GM12878 (cell line): ENCODE measurements at regions of chrX and their contacts with region 1.

Region 1: GRCh38 chrX:130173190-130173895 is 1.6 kb downstream of the RAB33A start:
- DNase-seq: peak; percentile 56
- ATAC-seq: peak; percentile 54
- H3K4me3 ChIP-seq: peak overlapping the region; percentile 80
- H3K27ac ChIP-seq: peak overlapping the region; percentile 84
- H3K4me1 ChIP-seq: peaks cover 17% of the 10 kb centered on the region
- H3K27me3 ChIP-seq: no peaks in the 10 kb centered on the region
- CTCF ChIP-seq: no peak
- EP300 ChIP-seq: no peak
- POLR2A ChIP-seq: peak; percentile 71
- RAD21 ChIP-seq: no peak

Region 2: DNA sequence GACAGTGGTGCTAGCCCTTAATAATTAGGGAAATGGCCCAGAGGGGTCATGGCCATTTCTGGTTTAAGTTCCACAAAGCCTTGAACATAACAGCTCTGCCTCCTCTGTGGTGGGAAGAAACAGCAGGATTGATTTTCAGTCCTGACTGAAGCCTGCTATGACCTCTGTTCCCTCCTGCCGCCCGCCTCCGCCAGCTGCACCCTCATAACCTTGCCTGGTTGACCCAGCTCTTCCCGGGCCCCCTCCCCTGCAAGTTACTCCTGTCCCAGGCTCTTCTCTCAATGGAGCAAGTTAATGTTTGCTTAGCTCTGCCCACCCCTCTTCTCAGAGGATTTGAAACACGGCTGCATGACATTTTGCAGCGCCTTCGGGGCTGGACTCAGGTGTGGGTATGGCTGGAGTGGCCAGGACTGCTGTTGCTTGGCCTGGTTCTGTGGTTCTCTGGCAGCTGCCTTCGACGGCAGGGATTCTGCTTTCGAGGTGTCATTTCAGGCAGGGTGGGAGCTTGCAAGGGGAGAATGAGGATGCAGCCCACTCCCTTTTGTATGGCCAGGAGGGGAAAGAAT is 163.6 kb before region 1 on chrX:
- CTCF ChIA-PET with region 1: no interaction called
- POLR2A ChIA-PET with region 1: no interaction called
- RAD21 ChIA-PET with region 1: no interaction called
- SMC1A ChIA-PET with region 1: no interaction called
- in situ Hi-C with region 1: no loop called
- intact Hi-C with region 1: no loop called
- DNase-seq: no peak
- ATAC-seq: no peak
- H3K4me3 ChIP-seq: no peak overlapping the region
- H3K27ac ChIP-seq: no peak overlapping the region
- H3K4me1 ChIP-seq: no peaks in the 10 kb centered on the region
- H3K27me3 ChIP-seq: no peaks in the 10 kb centered on the region; a peak in 1 of 4 replicates
- CTCF ChIP-seq: no peak
- EP300 ChIP-seq: no peak
- POLR2A ChIP-seq: no peak
- RAD21 ChIP-seq: no peak

Region 3: DNA sequence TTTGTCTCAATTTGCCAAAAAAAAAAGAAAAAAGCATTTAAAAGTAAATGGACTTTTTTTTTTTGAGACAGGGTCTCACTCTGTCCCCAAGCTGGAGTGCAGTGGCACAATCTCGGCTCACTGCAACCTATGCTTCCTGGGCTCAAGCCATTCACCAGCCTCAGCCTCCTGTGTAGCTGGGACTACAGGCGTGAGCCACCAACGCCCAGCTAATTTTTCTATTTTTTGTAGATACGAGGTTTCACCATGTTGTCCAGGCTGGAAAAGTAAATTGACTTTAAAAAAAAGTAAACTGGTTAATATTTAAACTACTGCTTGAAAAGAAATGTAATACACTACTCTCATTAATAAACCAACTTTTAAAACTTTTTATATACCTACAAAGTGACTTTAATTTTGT is 13.6 kb before region 1 on chrX:
- CTCF ChIA-PET with region 1: interaction called, 4 read pairs
- POLR2A ChIA-PET with region 1: interaction called, 5 read pairs
- RAD21 ChIA-PET with region 1: interaction called, 6 read pairs
- SMC1A ChIA-PET with region 1: interaction called, 11 read pairs
- in situ Hi-C with region 1: no loop called
- intact Hi-C with region 1: no loop called
- DNase-seq: no peak
- ATAC-seq: peak; percentile 55; the same call in 2 of the 3 replicates
- H3K4me3 ChIP-seq: no peak overlapping the region
- H3K27ac ChIP-seq: no peak overlapping the region
- H3K4me1 ChIP-seq: no peaks in the 10 kb centered on the region
- H3K27me3 ChIP-seq: no peaks in the 10 kb centered on the region
- CTCF ChIP-seq: no peak
- EP300 ChIP-seq: no peak
- POLR2A ChIP-seq: no peak
- RAD21 ChIP-seq: no peak

Region 4: DNA sequence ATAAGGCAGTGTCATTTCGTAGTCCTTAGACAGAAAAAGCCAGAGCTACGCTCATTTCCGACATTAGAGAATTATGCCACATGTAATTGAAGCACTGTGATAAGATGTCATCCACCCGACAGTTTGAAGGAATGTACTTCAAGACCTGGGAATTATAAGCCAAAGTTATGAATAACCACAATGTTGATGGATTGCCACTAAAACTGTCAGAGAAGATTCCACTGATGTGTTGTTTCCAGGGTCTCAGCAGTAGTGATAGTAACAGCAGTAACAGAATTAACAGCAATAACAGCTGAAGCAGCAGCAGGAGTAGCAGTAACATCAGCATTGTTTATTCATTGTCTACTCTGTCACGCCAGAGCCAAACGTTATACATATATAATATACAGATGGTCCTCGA is 23.1 kb after region 1 on chrX:
- CTCF ChIA-PET with region 1: interaction called, 5 read pairs
- POLR2A ChIA-PET with region 1: no interaction called
- RAD21 ChIA-PET with region 1: interaction called, 3 read pairs
- SMC1A ChIA-PET with region 1: interaction called, 11 read pairs
- in situ Hi-C with region 1: no loop called
- intact Hi-C with region 1: no loop called
- DNase-seq: no peak
- ATAC-seq: no peak
- H3K4me3 ChIP-seq: no peak overlapping the region
- H3K27ac ChIP-seq: no peak overlapping the region
- H3K4me1 ChIP-seq: peaks cover 4% of the 10 kb centered on the region; the same call in 1 of the 2 replicates
- H3K27me3 ChIP-seq: no peaks in the 10 kb centered on the region
- CTCF ChIP-seq: no peak
- EP300 ChIP-seq: no peak
- POLR2A ChIP-seq: no peak
- RAD21 ChIP-seq: no peak

Region 5: DNA sequence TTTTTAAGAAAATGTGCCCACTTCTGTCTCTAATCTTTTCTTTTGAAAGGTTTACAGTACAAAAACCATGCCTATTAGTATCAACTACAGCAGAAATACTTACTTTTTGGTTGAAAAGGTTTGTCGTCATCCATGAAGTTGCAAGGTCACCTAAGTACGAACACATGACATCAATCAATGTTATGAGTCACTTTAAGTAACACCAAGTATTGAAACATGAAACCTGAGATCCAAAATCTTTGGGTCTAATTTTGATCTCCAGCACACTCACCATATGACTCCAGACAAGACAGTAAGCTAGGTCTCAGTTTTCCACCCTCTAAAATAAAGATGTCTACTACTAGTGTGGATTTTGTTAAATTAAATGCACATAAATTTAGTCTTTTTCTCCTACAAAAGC is 87.0 kb after region 1 on chrX:
- CTCF ChIA-PET with region 1: no interaction called
- POLR2A ChIA-PET with region 1: no interaction called
- RAD21 ChIA-PET with region 1: no interaction called
- SMC1A ChIA-PET with region 1: no interaction called
- in situ Hi-C with region 1: no loop called
- intact Hi-C with region 1: no loop called
- DNase-seq: no peak
- ATAC-seq: no peak
- H3K4me3 ChIP-seq: no peak overlapping the region
- H3K27ac ChIP-seq: no peak overlapping the region
- H3K4me1 ChIP-seq: no peaks in the 10 kb centered on the region
- H3K27me3 ChIP-seq: no peaks in the 10 kb centered on the region
- CTCF ChIP-seq: no peak
- EP300 ChIP-seq: no peak
- POLR2A ChIP-seq: no peak
- RAD21 ChIP-seq: no peak

Region 6: DNA sequence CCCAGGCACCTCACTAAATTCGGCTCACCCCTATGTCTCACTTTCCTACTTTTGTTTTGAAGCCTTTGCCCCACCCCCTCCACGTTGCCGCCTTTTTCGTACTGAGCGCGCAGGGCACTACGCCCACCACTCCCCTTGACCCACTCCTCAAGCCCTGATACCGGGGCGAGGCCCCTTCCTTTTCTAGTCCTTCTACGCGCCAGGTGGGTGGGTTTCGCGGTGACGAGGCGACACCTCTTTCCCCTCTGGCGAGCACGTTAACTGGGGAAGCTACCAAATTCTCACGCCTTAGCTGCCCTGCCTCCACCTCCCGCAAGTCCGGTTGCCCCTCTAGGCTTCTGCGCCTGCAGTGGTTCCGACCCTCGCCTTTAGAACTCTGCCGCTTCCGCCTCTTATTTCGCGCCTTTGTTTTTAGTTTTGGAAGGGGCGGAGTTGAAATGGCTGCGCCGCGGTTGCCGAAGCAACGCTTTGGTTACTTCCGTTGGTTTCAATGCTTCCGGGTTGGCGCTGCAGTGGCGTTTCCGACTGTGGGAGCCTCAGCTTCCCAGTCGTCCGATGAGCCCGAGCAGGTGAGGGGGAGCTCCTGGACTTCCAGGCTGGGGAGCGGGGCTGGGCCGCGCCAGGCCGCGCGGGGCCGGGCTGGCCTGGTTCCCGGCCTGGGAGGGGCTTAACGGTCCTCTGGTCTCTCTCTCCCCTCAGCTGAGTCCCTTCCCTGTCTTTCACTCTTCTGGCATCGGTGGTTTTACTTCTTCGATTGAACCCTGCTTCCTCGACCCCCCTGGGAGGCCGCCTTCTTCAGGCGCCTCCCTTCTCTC is 166.3 kb after region 1 on chrX and contains the start of gene SLC25A14:
- CTCF ChIA-PET with region 1: no interaction called
- POLR2A ChIA-PET with region 1: no interaction called
- RAD21 ChIA-PET with region 1: no interaction called
- SMC1A ChIA-PET with region 1: no interaction called
- in situ Hi-C with region 1: no loop called
- intact Hi-C with region 1: no loop called
- DNase-seq: peak; percentile 38
- ATAC-seq: peak; percentile 95
- H3K4me3 ChIP-seq: peak within 1 kb of the TSS; percentile 67
- H3K27ac ChIP-seq: peak within 1 kb of the TSS; percentile 60
- H3K4me1 ChIP-seq: no peaks in the 10 kb centered on the region
- H3K27me3 ChIP-seq: no peaks in the 10 kb centered on the region
- CTCF ChIP-seq: no peak
- EP300 ChIP-seq: no peak
- POLR2A ChIP-seq: peak; percentile 71
- RAD21 ChIP-seq: no peak
- polyA plus RNA-seq, gene SLC25A14: 14.5 to 16.7 TPM